Activated T-helper 1 cell treated with anti-CD3 and anti-CD28 coated beads, Interleukin-12 subunit alpha, Interleukin-12 subunit beta, Interleukin-2, Interleukin-4 antibody, amounts not matched to agents 30 ng/mL and 10 ng/mL and 1 ng/mL, durations not matched to agents 14 hours and 24 hours and 36 hours (primary cell): ENCODE measurements at regions of chr2 and their contacts with region 1.

Region 1: GRCh38 chr2:36147670-36148390 is 207.7 kb upstream of the CRIM1 start:
- DNase-seq: no peak
- H3K4me3 Mint-ChIP-seq: peak overlapping the region; percentile 19
- H3K27ac Mint-ChIP-seq: peak overlapping the region; percentile 49
- H3K4me1 Mint-ChIP-seq: peaks cover 26% of the 10 kb centered on the region
- H3K27me3 Mint-ChIP-seq: peaks cover 17% of the 10 kb centered on the region

Region 2: DNA sequence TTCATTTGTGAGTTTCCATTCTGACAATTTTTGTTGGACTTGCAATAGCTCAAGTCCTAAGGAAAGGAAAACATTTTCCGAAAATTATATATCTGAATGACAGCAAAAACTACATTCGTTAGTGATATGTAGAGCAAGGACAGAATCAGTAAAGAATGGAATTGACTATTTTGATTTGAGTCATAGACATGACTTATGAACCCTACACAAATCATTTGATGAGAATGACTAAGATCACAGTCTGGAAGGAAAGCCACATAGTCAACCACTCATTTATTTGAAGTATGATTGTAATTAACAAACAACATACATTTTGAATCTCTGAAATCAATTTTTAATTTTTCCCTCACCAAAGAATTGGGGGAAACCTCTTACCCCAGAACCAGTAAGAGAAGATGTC is 23.8 kb before region 1 on chr2:
- intact Hi-C with region 1: loop called (anchors 1 kb)
- DNase-seq: no peak
- H3K4me3 Mint-ChIP-seq: no peak overlapping the region
- H3K27ac Mint-ChIP-seq: no peak overlapping the region
- H3K4me1 Mint-ChIP-seq: peaks cover 11% of the 10 kb centered on the region
- H3K27me3 Mint-ChIP-seq: peaks cover 23% of the 10 kb centered on the region

Region 3: GRCh38 chr2:36307441-36307840 is 159.6 kb after region 1 on chr2:
- intact Hi-C with region 1: loop called (anchors 1 kb)
- DNase-seq: no peak
- H3K4me3 Mint-ChIP-seq: no peak overlapping the region
- H3K27ac Mint-ChIP-seq: no peak overlapping the region
- H3K4me1 Mint-ChIP-seq: peaks cover 24% of the 10 kb centered on the region
- H3K27me3 Mint-ChIP-seq: peaks cover 4% of the 10 kb centered on the region

Region 4: DNA sequence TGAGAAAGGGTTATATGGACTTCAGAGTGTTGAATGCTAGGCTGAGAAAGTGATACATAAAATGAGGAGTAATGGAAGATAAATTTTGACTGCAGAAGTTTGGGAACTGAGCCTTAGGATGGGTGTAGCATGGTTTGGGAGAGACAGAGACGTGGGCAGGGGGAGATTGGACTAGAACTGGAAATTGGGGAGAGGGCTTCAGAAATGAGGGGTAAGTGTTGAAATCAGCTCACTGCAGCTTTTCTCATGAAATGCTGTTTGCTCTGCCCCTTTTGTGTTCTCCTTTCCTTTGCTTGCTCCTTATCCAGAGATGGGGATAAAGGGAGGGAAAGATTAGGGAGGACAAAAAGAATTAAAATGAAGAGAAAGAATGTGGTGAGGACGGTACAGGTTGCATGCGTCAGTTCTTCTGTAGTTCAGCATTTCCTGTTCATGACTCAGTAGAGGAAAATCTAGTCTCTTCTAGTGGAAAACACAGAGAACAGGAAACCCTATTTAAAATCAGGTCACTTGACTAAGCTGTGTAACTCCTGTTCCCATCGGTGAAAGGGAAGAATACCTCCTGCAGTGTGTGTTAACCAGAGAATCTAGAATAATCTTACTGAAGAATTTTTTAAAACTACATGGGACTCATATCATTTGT is 313.3 kb after region 1 on chr2:
- intact Hi-C with region 1: loop called (anchors 1 kb)
- DNase-seq: no peak
- H3K4me3 Mint-ChIP-seq: no peak overlapping the region
- H3K27ac Mint-ChIP-seq: no peak overlapping the region
- H3K4me1 Mint-ChIP-seq: no peaks in the 10 kb centered on the region
- H3K27me3 Mint-ChIP-seq: peaks cover 2% of the 10 kb centered on the region

Region 5: GRCh38 chr2:36711741-36712288 is 564.0 kb after region 1 on chr2:
- intact Hi-C with region 1: no loop called
- DNase-seq: no peak
- H3K4me3 Mint-ChIP-seq: no peak overlapping the region
- H3K27ac Mint-ChIP-seq: no peak overlapping the region
- H3K4me1 Mint-ChIP-seq: no peaks in the 10 kb centered on the region
- H3K27me3 Mint-ChIP-seq: peaks cover 2% of the 10 kb centered on the region

Region 6: GRCh38 chr2:36982467-36982866 is 834.6 kb after region 1 on chr2:
- intact Hi-C with region 1: no loop called
- DNase-seq: no peak
- H3K4me3 Mint-ChIP-seq: no peak overlapping the region
- H3K27ac Mint-ChIP-seq: no peak overlapping the region
- H3K4me1 Mint-ChIP-seq: no peaks in the 10 kb centered on the region
- H3K27me3 Mint-ChIP-seq: no peaks in the 10 kb centered on the region